Right ventricle myocardium superior (tissue), 1 donor: ENCODE measurements at regions of chr6 and their contacts with region 1.

Region 1: GRCh38 chr6:133553652-133554051 is 312.5 kb downstream of the EYA4 start:
- DNase-seq: no peak
- ATAC-seq: peak; percentile 72

Region 2: DNA sequence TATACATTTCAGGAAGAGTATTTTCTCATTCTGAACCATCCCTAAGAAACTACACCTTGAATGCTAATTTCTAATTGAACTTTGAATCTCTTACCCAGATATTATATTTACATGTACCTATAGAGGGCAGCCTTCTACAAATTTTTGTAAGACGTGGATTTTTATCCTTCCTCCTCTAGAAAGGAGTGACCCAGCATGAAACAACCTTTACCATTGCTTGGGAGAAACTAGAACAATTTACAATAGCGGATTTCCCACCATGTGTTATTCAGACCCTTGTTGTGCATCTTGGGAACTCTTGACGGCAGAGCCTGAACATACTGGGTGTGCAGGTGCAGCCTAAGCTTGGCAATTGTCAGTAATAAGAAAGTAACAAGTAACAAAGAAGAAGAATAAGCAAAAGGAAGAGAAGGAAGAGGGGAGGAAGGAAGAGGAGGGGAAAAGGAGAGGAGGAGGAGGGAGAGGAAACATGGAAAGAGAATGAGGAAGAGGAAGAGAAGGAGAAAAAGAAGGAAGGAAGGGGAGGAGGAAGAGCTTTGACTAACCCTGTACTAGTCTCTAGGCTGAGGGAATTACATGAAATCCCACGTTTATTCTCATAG is 883.9 kb before region 1 on chr6:
- intact Hi-C with region 1: loop called (anchors 10 kb)
- DNase-seq: no peak
- ATAC-seq: peak; percentile 66

Region 3: GRCh38 chr6:132830334-132830751 is 723.3 kb before region 1 on chr6:
- intact Hi-C with region 1: loop called (anchors 5 kb)
- DNase-seq: no peak
- ATAC-seq: peak; percentile 62

Region 4: GRCh38 chr6:133837801-133838349 is 284.2 kb after region 1 on chr6:
- intact Hi-C with region 1: no loop called
- DNase-seq: peak; percentile 53
- ATAC-seq: no peak